Common myeloid progenitor, CD34-positive (primary cell): ENCODE measurements at regions of chr3 and their contacts with region 1.

Region 1: GRCh38 chr3:25594007-25594502 is 70.7 kb downstream of the TOP2B start:
- DNase-seq: peak; percentile 73 to 90 (median 87)
- H3K4me3 ChIP-seq: no peak overlapping the region
- H3K27ac ChIP-seq: no peak overlapping the region
- H3K4me1 ChIP-seq: no peaks in the 10 kb centered on the region
- H3K27me3 ChIP-seq: no peaks in the 10 kb centered on the region

Region 2: DNA sequence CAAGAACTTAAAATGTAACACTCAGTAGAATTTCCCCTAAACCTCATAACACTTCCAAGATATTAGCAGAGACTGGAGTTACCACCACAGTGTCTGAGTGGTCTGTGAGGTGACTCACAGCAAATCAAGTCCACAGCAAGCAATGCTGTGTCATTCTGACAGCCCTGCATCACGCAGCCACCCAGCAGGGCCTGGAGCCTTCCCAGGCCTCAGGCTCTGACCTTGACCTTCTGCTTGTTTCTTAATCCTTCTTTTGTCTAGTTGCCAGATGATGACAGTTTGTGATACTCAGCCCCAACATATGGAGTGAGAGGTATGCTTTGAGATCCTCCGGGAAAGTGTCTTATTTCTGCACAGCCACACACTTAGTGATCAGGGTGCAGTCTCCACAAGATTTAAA is 11.8 kb before region 1 on chr3:
- CTCF ChIA-PET with region 1: interaction called, 16 read pairs
- POLR2A ChIA-PET with region 1: no interaction called
- DNase-seq: peak in 1 of 3 donors; percentile 41
- H3K4me3 ChIP-seq: no peak overlapping the region
- H3K27ac ChIP-seq: no peak overlapping the region
- H3K4me1 ChIP-seq: no peaks in the 10 kb centered on the region
- H3K27me3 ChIP-seq: no peaks in the 10 kb centered on the region

Region 3: DNA sequence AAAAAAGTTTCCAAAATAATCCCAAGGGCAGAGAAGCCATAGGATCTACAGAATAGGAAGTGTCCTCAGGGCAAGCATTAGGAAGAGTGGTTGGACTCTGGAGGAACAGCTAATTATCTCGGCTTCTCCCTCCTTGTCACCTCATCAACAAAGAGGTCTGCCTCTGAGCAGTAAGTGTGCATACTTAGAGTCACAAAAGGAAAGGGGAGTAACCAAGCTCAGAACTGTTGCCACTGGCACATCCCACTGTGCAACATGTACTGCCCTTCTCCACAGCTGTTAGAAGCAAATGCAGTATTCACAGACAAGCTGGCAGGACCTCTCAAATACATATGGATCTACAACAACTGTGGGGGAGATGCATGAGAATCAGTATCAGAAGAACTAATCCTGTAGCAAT is 157.7 kb after region 1 on chr3:
- CTCF ChIA-PET with region 1: no interaction called
- POLR2A ChIA-PET with region 1: no interaction called
- DNase-seq: no peak
- H3K4me3 ChIP-seq: no peak overlapping the region
- H3K27ac ChIP-seq: no peak overlapping the region
- H3K4me1 ChIP-seq: no peaks in the 10 kb centered on the region
- H3K27me3 ChIP-seq: no peaks in the 10 kb centered on the region